CD4-positive, alpha-beta T cell (primary cell): ENCODE measurements at regions of chr11 and their contacts with region 1.

Region 1: GRCh38 chr11:20261526-20261925 is 101.3 kb upstream of the DBX1 start:
- DNase-seq: no peak
- ATAC-seq: no peak
- H3K4me3 ChIP-seq: no peak overlapping the region
- H3K4me3 Mint-ChIP-seq: no peak overlapping the region
- H3K27ac ChIP-seq: no peak overlapping the region
- H3K27ac Mint-ChIP-seq: no peak overlapping the region
- H3K4me1 ChIP-seq: no peaks in the 10 kb centered on the region
- H3K4me1 Mint-ChIP-seq: no peaks in the 10 kb centered on the region
- H3K27me3 ChIP-seq: peaks cover 0 to 8% of the 10 kb centered on the region in 2 experiments
- H3K27me3 Mint-ChIP-seq: peaks cover 41% of the 10 kb centered on the region
- CTCF ChIP-seq: no peak

Region 2: DNA sequence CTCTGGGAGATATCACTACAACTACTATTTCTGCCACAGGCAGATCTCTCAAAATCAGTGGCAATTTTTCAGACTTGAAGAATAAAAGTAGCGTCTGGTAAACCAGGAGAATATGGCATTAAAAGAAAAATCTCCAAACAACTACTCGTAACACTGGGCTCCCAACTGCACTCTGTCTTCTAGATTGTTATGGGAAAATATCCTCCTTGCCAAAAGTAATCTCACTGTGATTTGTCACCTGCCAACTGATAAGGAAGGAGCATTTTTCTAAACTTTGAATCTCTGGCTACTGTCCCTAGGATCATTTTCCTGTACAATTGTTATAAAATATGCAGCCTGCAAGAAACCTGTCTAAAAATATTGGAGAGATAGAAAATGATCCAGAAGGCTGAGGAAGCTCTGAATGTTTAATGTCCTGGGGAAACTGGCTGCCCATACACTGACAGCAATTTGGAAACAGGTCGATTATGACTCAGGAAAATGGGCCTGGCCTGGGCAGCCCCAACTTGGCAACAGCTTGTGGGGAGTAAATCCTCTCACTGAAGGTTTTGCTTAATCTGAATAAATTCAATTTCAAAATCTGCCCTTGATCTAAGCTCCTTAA is 10.8 kb before region 1 on chr11:
- CTCF ChIA-PET with region 1: no interaction called
- POLR2A ChIA-PET with region 1: no interaction called
- intact Hi-C with region 1: loop called in 1 of 2 experiments (anchors 2 kb)
- DNase-seq: no peak
- ATAC-seq: no peak
- H3K4me3 ChIP-seq: no peak overlapping the region
- H3K4me3 Mint-ChIP-seq: no peak overlapping the region
- H3K27ac ChIP-seq: no peak overlapping the region
- H3K27ac Mint-ChIP-seq: no peak overlapping the region
- H3K4me1 ChIP-seq: no peaks in the 10 kb centered on the region
- H3K4me1 Mint-ChIP-seq: no peaks in the 10 kb centered on the region
- H3K27me3 ChIP-seq: peaks cover 0 to 10% of the 10 kb centered on the region in 2 experiments
- H3K27me3 Mint-ChIP-seq: peaks cover 35% of the 10 kb centered on the region
- CTCF ChIP-seq: no peak

Region 3: DNA sequence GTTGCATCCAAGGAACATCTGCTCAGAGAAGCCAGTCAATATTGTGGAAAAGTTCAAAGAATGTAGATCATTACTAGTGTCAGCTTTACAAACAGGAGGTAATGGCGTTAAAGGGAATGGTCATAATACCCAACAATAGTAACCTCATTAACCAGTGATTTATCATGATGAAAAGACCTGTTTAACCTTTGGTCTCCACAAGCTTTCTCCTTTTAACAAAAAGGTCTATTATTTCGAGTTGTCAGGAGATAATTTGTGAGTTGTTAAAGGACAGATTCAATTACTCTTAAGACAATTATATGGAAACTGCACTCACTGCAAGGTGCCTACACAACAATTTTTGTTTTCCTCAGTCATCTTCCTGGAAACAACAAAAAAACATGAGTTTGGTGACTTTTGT is 28.2 kb after region 1 on chr11:
- CTCF ChIA-PET with region 1: no interaction called
- POLR2A ChIA-PET with region 1: no interaction called
- intact Hi-C with region 1: no loop called
- DNase-seq: no peak
- ATAC-seq: no peak
- H3K4me3 ChIP-seq: no peak overlapping the region
- H3K4me3 Mint-ChIP-seq: no peak overlapping the region
- H3K27ac ChIP-seq: no peak overlapping the region
- H3K27ac Mint-ChIP-seq: no peak overlapping the region
- H3K4me1 ChIP-seq: no peaks in the 10 kb centered on the region
- H3K4me1 Mint-ChIP-seq: no peaks in the 10 kb centered on the region
- H3K27me3 ChIP-seq: no peaks in the 10 kb centered on the region
- H3K27me3 Mint-ChIP-seq: peaks cover 50% of the 10 kb centered on the region
- CTCF ChIP-seq: no peak